ENCODE measurements at regions of chr11 and their contacts with region 1.

Region 1: GRCh38 chr11:35030716-35031213 is 108.2 kb upstream of the CD44 start:
- DNase-seq: no peak
- H3K4me3 Mint-ChIP-seq: peak overlapping the region; percentile 51
- H3K27ac Mint-ChIP-seq: peak overlapping the region; percentile 88
- H3K4me1 Mint-ChIP-seq: peaks cover 44% of the 10 kb centered on the region
- H3K27me3 Mint-ChIP-seq: peaks cover 17% of the 10 kb centered on the region

Region 2: GRCh38 chr11:35006389-35007128 is 24.2 kb before region 1 on chr11:
- intact Hi-C with region 1: loop called (anchors 1 kb)
- DNase-seq: no peak
- H3K4me3 Mint-ChIP-seq: no peak overlapping the region
- H3K27ac Mint-ChIP-seq: peak overlapping the region; percentile 5
- H3K4me1 Mint-ChIP-seq: peaks cover 57% of the 10 kb centered on the region
- H3K27me3 Mint-ChIP-seq: peaks cover 28% of the 10 kb centered on the region

Region 3: GRCh38 chr11:35047179-35047578 is 16.4 kb after region 1 on chr11:
- intact Hi-C with region 1: no loop called
- DNase-seq: peak; percentile 22
- H3K4me3 Mint-ChIP-seq: peak overlapping the region; percentile 45
- H3K27ac Mint-ChIP-seq: peak overlapping the region; percentile 80
- H3K4me1 Mint-ChIP-seq: peaks cover 70% of the 10 kb centered on the region
- H3K27me3 Mint-ChIP-seq: peaks cover 9% of the 10 kb centered on the region